Panc1 (cell line): ENCODE measurements at regions of chr4 and their contacts with region 1.

Region 1: DNA sequence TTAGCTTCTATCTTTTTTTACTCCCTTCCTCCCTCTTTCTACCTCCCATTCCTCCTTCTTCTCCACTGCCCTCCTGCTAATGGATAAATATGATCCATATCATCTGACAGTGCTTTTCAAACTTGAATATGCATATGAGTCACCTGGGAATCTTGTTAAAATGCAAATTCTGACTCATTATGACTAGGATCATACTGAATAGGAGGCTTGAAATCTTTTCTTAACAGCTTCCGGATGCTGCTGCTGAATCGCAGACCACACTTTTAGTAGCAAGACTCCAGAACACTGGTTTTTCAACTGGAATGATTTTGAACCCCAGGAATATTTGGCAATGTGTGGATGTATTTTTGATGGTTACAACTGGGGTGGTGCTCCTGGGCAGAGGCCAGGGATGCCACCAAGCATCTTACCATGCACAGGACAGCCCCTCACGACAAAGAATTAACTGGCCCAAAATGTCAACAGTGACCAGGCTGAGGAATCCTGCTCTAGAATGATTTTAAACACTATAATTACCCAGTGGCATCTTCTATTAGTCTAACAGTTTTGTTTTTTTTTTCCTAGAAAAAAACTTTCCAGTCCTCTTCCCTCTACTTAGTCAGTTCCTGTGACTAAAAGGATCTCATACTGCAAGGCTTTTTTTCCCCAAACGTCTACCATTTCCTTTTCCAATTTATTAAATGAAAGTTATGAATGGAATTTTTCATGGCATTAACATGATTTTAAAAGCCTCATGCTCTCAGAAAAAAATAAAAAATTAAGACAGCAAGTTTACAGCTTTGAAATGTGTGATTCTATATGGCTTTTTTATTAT is 10.6 kb upstream of the PYURF start:
- DNase-seq: no peak
- ATAC-seq: peak; percentile 58; the same call in 1 of the 2 replicates
- H3K4me3 ChIP-seq: no peak overlapping the region
- H3K27ac ChIP-seq: no peak overlapping the region
- H3K4me1 ChIP-seq: no peaks in the 10 kb centered on the region
- H3K27me3 ChIP-seq: no peaks in the 10 kb centered on the region
- CTCF ChIP-seq: no peak

Region 2: DNA sequence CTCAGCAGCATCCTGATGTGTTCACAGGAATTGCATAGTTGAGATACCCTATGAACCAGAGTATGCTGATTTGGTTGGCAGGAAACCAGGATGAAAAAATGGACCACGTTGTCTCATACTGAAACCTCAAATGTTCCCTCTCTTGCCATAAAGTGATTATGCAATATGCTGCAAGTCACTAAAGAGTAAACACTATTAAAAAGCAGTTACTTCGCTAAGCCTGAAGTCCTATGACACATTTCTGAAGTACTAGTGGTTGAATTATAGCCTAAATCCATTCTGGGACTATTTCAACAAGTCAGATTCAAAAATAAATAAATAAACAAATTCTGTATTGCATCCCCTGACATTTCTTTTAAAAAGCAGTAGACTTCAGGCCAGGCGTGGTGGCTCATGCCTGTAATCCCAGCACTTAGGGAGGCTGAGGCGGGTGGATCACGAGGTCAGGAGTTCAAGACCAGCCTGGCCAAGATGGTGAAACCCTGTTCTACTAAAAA is 269.5 kb after region 1 on chr4:
- CTCF ChIA-PET with region 1: no interaction called
- POLR2A ChIA-PET with region 1: no interaction called
- in situ Hi-C with region 1: no loop called
- intact Hi-C with region 1: loop called (anchors 10 kb)
- DNase-seq: peak; percentile 52
- ATAC-seq: no peak
- H3K4me3 ChIP-seq: no peak overlapping the region
- H3K27ac ChIP-seq: no peak overlapping the region
- H3K4me1 ChIP-seq: no peaks in the 10 kb centered on the region
- H3K27me3 ChIP-seq: no peaks in the 10 kb centered on the region
- CTCF ChIP-seq: no peak